Activated CD4-positive, alpha-beta T cell treated with anti-CD3 and anti-CD28 coated beads, Interleukin-2, amount 10 ng/mL, durations not matched to agents 7 days and 5 days (primary cell): ENCODE measurements at regions of chr22 and their contacts with region 1.

Region 1: DNA sequence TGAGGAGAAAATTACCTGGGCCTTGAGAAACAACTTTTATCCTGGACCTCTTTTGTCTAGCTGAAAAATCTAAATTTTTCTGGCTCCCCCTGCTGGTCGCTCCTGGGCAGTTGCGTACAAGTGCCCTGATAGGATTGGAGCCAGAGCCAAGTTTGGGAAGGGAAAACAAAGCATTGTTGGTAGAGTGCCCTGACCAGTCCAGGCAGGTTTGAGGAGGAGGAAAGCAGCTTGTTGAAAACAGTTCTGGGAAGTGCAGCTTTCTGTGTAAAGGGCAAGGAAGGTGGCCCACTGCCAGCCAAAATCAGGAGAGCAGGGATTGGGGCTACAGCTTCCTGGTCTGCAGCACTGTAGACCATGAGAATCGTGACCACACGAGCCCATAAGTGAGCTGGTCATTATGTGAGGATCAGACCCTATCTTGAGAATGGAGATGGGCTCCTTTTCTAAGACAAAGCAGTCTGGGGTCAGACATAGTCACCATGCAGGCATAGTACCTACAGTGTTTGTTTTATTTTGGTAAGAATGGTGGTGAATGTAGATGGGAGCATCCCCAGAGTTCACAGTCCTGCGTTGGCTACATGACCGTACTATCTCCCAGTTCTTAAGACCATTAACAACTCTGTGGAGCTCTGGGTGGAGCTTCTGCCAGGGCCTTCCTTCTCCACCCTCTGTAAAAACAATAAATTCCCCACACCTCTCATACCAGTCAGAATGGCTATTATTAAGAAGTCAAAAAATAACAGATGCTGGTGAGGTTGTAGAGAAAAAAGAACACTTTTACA is 21.3 kb upstream of the PIK3IP1 start:
- DNase-seq: peak; percentile 77
- H3K4me3 Mint-ChIP-seq: no peak overlapping the region
- H3K27ac Mint-ChIP-seq: peak overlapping the region; percentile 34
- H3K4me1 Mint-ChIP-seq: peaks cover 20% of the 10 kb centered on the region
- H3K27me3 Mint-ChIP-seq: no peaks in the 10 kb centered on the region

Region 2: GRCh38 chr22:31272522-31273446 is 40.8 kb before region 1 on chr22:
- CTCF ChIA-PET with region 1: no interaction called
- POLR2A ChIA-PET with region 1: no interaction called
- DNase-seq: peak; percentile 66
- H3K4me3 Mint-ChIP-seq: no peak overlapping the region
- H3K27ac Mint-ChIP-seq: peak overlapping the region; percentile 13
- H3K4me1 Mint-ChIP-seq: peaks cover 41% of the 10 kb centered on the region
- H3K27me3 Mint-ChIP-seq: no peaks in the 10 kb centered on the region

Region 3: GRCh38 chr22:31295831-31296657 is 17.5 kb before region 1 on chr22:
- CTCF ChIA-PET with region 1: interaction called, 12 read pairs
- POLR2A ChIA-PET with region 1: no interaction called
- DNase-seq: no peak
- H3K4me3 Mint-ChIP-seq: peak overlapping the region; percentile 3
- H3K27ac Mint-ChIP-seq: peak overlapping the region; percentile 68
- H3K4me1 Mint-ChIP-seq: peaks cover 39% of the 10 kb centered on the region
- H3K27me3 Mint-ChIP-seq: no peaks in the 10 kb centered on the region

Region 4: DNA sequence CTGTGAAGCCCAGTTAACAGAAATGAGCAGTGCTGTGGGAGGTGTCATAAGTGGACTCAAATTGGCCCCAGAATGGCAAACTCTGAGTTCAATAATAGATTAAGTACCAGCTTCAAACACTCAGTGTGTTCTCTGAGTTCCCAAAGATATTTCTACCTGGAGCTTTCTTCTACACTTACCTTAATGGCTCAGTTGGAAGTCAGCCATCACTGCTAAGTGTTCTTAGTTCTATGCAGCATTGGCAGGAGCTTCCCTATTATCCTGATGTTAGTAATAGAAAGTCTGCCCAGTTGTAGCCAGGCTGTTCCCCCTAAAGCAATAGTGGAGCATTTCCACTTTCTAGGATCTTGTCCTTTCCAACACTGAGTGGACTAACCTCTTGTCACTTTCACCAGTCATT is 11.6 kb before region 1 on chr22:
- CTCF ChIA-PET with region 1: interaction called, 12 read pairs
- POLR2A ChIA-PET with region 1: no interaction called
- DNase-seq: no peak
- H3K4me3 Mint-ChIP-seq: no peak overlapping the region
- H3K27ac Mint-ChIP-seq: no peak overlapping the region
- H3K4me1 Mint-ChIP-seq: peaks cover 12% of the 10 kb centered on the region
- H3K27me3 Mint-ChIP-seq: no peaks in the 10 kb centered on the region

Region 5: DNA sequence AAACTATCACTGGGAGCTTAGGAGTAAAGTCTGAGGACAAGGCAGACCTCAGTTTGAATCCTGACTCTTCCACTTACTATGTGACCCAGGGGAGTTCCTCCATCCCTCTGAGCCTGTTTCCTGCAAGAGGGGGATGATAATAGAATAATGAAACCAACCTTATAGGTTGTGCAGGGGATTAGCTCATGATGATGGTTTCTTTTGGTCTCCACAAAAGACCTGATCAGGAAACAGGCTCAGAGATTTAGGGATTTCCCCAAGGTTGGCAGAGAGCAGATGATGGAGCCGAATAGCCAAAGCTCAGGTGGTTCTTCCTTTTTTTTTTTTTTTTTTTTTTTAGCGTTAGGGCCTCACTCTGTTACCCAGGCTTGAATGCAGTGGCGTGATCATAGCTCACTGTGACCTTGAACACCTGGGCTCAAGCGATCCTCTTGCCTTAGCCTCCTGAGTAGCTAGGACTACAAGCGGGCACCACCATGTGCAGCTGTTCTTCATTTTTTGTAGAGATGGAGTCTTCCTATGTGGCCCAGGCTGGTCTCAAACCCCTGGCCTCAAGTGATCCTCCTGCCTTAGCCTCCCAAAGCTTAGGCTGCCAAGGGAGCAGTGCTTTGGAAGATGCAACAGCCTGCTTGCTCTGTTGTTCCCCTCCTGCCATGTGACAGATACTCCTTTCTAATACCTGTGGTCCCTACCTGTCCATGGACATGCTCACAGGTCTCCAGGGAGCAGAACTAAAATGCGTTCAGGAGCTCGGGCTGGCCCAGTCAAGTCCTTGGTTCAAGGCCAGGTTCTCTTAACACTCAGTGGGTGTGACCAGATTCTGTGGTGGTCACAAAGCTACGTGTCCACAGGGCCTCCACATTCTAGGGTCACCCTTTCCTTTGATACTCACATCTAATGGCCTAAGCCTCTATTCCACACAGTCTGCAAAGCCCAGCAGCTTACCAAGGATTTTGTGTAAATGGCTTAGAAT is 10.3 kb after region 1 on chr22:
- CTCF ChIA-PET with region 1: interaction called, 10 read pairs
- POLR2A ChIA-PET with region 1: no interaction called
- DNase-seq: no peak
- H3K4me3 Mint-ChIP-seq: no peak overlapping the region
- H3K27ac Mint-ChIP-seq: no peak overlapping the region
- H3K4me1 Mint-ChIP-seq: no peaks in the 10 kb centered on the region
- H3K27me3 Mint-ChIP-seq: no peaks in the 10 kb centered on the region